ENCODE measurements at regions of chr2 and their contacts with region 1.

Region 1: DNA sequence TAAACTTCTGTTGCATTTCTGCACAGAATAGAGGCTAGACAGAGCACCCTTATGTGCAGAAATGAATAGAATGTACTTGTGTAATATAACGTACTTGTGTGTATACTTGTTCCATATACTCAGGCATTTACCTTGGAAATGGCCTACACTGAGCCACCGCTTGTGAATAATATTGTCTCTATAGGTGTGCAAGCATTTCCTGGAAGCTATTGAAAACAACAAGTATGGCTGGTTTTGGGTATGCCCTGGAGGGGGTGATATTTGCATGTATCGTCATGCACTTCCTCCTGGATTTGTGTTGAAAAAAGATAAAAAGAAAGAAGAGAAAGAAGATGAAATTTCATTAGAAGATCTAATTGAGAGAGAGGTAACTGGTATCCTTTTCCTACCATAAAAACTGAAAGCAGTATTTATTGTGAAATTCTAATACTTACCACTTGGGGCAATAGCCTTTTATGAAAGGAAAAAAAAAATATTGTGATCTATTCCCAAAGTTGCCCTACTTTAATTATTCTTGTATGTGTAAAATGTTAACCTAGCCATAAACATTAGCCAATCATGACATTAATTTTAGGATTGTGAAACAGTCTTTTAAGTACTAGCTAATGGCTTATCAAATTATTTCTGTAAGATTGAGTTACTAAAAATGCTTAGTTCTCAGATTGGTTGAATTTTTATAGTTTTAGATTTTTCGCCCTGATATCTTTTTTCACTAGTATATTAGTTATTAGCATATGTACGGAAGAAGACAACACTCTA is 18.0 kb downstream of the ZC3H15 start:
- DNase-seq: no peak
- H3K4me3 Mint-ChIP-seq: peak overlapping the region; percentile 34
- H3K27ac Mint-ChIP-seq: peak overlapping the region; percentile 63
- H3K4me1 Mint-ChIP-seq: peaks cover 7% of the 10 kb centered on the region
- H3K27me3 Mint-ChIP-seq: no peaks in the 10 kb centered on the region

Region 2: GRCh38 chr2:186101616-186102015 is 402.4 kb before region 1 on chr2:
- CTCF ChIA-PET with region 1: no interaction called
- POLR2A ChIA-PET with region 1: no interaction called
- DNase-seq: no peak
- H3K4me3 Mint-ChIP-seq: no peak overlapping the region
- H3K27ac Mint-ChIP-seq: no peak overlapping the region
- H3K4me1 Mint-ChIP-seq: no peaks in the 10 kb centered on the region
- H3K27me3 Mint-ChIP-seq: no peaks in the 10 kb centered on the region

Region 3: GRCh38 chr2:186445506-186445905 is 58.5 kb before region 1 on chr2:
- CTCF ChIA-PET with region 1: no interaction called
- POLR2A ChIA-PET with region 1: no interaction called
- DNase-seq: no peak
- H3K4me3 Mint-ChIP-seq: no peak overlapping the region
- H3K27ac Mint-ChIP-seq: no peak overlapping the region
- H3K4me1 Mint-ChIP-seq: no peaks in the 10 kb centered on the region
- H3K27me3 Mint-ChIP-seq: no peaks in the 10 kb centered on the region

Region 4: GRCh38 chr2:186485871-186486650 is 18.0 kb before region 1 on chr2 and contains the start of gene ZC3H15:
- CTCF ChIA-PET with region 1: interaction called, 17 read pairs
- POLR2A ChIA-PET with region 1: interaction called, 12 read pairs
- DNase-seq: peak; percentile 97
- H3K4me3 Mint-ChIP-seq: peak within 1 kb of the TSS; percentile 98
- H3K27ac Mint-ChIP-seq: peak within 1 kb of the TSS; percentile 91
- H3K4me1 Mint-ChIP-seq: peaks cover 53% of the 10 kb centered on the region
- H3K27me3 Mint-ChIP-seq: no peaks in the 10 kb centered on the region
- total RNA-seq, gene ZC3H15: 63.3 to 67.5 TPM

Region 5: GRCh38 chr2:186589612-186590349 is 85.8 kb after region 1 on chr2 and contains the start of gene ITGAV:
- CTCF ChIA-PET with region 1: interaction called, 10 read pairs
- POLR2A ChIA-PET with region 1: interaction called, 3 read pairs
- DNase-seq: peak; percentile 87
- H3K4me3 Mint-ChIP-seq: peak within 1 kb of the TSS; percentile 83
- H3K27ac Mint-ChIP-seq: peak within 1 kb of the TSS; percentile 73
- H3K4me1 Mint-ChIP-seq: peaks cover 32% of the 10 kb centered on the region
- H3K27me3 Mint-ChIP-seq: no peaks in the 10 kb centered on the region
- total RNA-seq, gene ITGAV: 9.8 to 10.2 TPM

Region 6: GRCh38 chr2:186641807-186642321 is 137.8 kb after region 1 on chr2:
- CTCF ChIA-PET with region 1: interaction called, 94 read pairs
- POLR2A ChIA-PET with region 1: interaction called, 9 read pairs
- DNase-seq: peak; percentile 34
- H3K4me3 Mint-ChIP-seq: no peak overlapping the region
- H3K27ac Mint-ChIP-seq: no peak overlapping the region
- H3K4me1 Mint-ChIP-seq: peaks cover 25% of the 10 kb centered on the region
- H3K27me3 Mint-ChIP-seq: no peaks in the 10 kb centered on the region

Measured in activated CD4-positive, alpha-beta memory T cell treated with anti-CD3 and anti-CD28 coated beads, Interleukin-2, amount 10 ng/mL, durations not matched to agents 7 days and 5 days (primary cell).